ENCODE measurements at regions of chr3 and their contacts with region 1.

Region 1: DNA sequence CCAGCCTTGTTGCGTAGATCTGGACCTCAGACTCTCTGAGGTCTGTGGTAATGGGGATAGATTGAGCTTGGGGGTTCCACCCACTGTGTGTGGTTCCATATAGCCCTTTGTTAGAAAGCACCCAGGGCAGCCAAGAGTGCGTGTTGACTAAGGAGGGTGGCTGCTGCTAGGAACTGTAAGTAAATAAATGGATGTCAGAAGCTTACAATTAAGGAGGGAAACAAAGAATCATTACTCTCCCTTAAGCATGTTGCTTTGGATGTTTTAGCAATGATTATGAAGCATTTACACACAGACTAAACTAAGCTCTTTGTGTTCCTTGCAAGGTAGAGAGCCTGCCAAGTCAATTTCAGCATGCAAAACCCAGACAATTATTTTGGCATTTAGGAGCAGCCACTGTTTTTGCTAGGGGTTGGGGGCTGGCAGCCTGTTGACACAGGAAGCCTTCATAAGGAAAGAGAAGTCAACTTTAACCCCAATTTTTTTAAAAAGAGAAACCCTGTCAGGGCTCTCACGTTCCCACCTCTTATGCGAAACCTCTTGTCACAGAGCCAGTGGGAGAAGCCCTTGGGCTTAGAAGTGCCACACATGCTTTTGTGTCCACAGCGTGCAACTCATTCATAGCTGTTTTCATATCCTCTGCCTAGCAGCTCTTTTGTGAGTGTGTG is 127.8 kb downstream of the CMSS1 start:
- DNase-seq: peak in 1 of 2 donors; percentile 74
- H3K4me3 ChIP-seq: peak overlapping the region in 1 of 2 donors; percentile 6
- H3K27ac ChIP-seq: peak overlapping the region; percentile 84 to 92
- H3K4me1 ChIP-seq: peaks cover 19 to 67% of the 10 kb centered on the region in 2 donors
- H3K27me3 ChIP-seq: no peaks in the 10 kb centered on the region
- CTCF ChIP-seq: no peak

Region 2: DNA sequence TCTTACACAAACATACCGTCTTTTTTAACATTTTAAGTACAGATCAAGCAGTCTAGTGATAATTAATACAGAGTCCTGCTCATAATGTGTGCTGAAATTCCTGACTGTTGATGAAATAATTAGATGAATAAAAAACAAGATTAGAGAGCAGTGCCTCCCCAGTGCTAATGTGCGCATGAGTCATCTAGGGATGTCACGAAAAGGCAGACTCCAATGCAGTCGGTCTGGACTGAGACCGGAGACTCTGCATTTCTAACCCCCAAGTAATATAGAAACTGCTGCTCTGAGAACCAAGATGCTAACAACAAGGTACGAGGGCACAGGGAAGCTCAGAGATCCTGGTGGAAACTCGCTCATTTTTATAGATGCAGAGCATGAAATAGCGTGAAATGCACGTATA is 245.6 kb before region 1 on chr3:
- intact Hi-C with region 1: no loop called
- DNase-seq: no peak
- H3K4me3 ChIP-seq: no peak overlapping the region
- H3K27ac ChIP-seq: peak overlapping the region; percentile 41 to 62
- H3K4me1 ChIP-seq: peaks cover 0 to 24% of the 10 kb centered on the region in 2 donors
- H3K27me3 ChIP-seq: no peaks in the 10 kb centered on the region
- CTCF ChIP-seq: no peak

Region 3: DNA sequence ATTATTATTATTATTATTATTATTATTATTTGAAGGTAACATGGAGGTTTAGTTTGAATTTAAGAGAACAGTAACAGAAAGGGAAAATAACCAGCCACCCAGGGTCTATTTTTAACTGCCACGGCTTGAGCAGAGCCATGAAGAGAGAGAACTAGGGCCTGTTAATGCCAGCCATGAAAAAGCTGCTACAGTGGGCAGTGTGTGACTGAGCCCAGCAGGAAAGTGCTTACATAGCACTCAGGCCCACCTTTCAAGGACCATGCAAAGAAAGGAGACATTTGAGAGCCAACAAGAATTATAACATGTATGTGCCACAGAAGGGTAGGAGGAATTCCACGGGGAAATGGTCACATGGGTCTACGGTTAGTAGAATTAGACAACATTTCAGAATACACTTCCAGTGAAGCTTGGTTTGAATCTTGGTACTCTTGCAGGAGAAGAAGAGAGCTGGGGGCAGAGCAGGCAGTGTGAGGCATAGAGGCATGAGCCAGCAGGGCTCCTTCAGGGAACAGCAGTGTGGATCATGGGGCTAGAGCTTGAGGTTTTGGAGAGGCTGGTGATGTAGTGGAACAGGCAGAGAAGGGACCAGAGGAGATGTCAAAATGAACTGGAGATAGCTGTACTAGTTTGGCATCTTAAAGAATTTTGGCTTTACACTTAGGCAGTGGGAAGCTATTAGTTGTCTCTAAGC is 12.9 kb after region 1 on chr3:
- intact Hi-C with region 1: loop called (anchors 2 kb)
- DNase-seq: no peak
- H3K4me3 ChIP-seq: no peak overlapping the region
- H3K27ac ChIP-seq: peak overlapping the region; percentile 87 to 89
- H3K4me1 ChIP-seq: peaks cover 10 to 40% of the 10 kb centered on the region in 2 donors
- H3K27me3 ChIP-seq: no peaks in the 10 kb centered on the region
- CTCF ChIP-seq: no peak

Region 4: DNA sequence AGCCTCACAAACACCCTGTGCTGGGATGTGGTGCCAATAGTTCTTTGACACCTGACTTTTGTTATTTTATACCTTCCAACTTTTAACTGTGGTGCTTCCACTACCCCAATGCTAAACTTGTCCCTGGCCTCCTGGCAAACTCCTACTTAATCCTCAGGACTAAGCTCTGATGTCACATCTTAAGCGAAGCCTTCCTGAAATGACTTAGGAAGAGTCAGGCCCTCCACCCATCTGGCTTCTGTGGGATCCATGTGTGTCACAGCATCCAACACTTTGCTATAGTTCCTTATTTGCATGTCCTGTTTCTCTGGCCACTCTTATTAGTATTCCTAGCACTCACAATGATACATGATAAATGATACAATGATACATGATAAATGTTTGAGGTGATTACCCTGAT is 35.7 kb after region 1 on chr3:
- intact Hi-C with region 1: no loop called
- DNase-seq: no peak
- H3K4me3 ChIP-seq: no peak overlapping the region
- H3K27ac ChIP-seq: peak overlapping the region in 1 of 2 donors; percentile 30
- H3K4me1 ChIP-seq: peaks cover 0 to 3% of the 10 kb centered on the region in 2 donors
- H3K27me3 ChIP-seq: no peaks in the 10 kb centered on the region
- CTCF ChIP-seq: no peak

Region 5: DNA sequence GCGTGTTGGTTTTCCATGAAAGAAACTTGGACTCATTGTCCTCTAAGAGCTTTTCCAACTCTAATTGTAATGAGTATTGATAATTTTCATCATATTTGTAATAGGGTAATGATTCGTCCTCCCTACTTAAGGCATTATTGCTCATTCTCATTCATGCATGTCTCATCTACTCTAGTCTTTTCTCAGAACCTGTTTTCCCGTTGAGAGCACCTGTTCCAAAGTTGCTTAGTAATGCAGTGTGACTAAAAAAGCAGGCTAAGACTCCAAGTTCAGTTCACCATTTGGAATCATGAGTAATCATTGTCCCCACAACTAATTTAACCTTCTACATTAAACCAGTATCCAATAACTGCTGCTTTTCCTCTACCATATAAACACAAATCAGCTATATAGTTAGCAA is 84.9 kb after region 1 on chr3:
- intact Hi-C with region 1: no loop called
- DNase-seq: no peak
- H3K4me3 ChIP-seq: no peak overlapping the region
- H3K27ac ChIP-seq: peak overlapping the region in 1 of 2 donors; percentile 45
- H3K4me1 ChIP-seq: peaks cover 4 to 23% of the 10 kb centered on the region in 2 donors
- H3K27me3 ChIP-seq: no peaks in the 10 kb centered on the region
- CTCF ChIP-seq: no peak

Region 6: DNA sequence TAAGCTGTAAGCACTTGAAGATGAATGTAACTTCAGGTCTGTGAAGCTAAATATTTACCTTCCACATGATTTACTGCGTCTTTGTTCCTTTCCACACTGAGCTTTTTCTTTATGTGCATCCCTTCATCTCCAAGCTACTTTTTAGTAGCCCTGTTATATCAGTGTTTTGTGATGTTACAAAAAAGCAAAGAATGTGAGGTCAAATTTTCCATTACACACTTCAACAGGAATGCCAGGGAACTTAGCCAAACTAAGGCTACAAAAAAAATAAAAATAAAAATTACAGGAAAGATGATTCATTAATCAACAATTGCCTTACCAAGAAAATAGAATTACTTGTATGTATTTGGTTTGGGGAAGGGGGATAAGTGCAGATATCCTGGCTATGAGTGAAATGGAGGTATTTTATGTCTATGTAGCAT is 95.9 kb after region 1 on chr3:
- intact Hi-C with region 1: loop called (anchors 2 kb)
- DNase-seq: no peak
- H3K4me3 ChIP-seq: no peak overlapping the region
- H3K27ac ChIP-seq: peak overlapping the region; percentile 89 to 94
- H3K4me1 ChIP-seq: peaks cover 9 to 40% of the 10 kb centered on the region in 2 donors
- H3K27me3 ChIP-seq: no peaks in the 10 kb centered on the region
- CTCF ChIP-seq: no peak

Region 7: DNA sequence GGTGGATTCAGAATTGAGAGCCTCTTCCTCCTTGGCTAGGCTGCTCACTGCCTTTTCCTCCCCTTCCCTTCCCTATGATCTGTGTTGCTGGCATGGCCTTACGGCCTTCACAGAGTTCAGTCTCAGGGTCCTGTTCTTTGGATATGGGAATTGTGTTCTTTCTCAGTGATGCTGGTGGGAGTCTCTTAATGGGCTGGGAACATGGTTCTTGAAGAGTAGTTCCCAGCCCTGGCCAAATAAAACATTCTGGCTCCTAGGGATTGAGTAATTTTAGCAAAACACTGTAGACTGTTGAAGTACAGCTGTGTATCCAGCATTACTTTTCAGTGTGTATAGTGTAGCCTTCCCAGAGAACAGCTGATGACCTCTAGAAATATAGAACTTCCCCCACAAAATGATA is 191.5 kb after region 1 on chr3:
- intact Hi-C with region 1: no loop called
- DNase-seq: no peak
- H3K4me3 ChIP-seq: no peak overlapping the region
- H3K27ac ChIP-seq: peak overlapping the region; percentile 67 to 76
- H3K4me1 ChIP-seq: peaks cover 0 to 20% of the 10 kb centered on the region in 2 donors
- H3K27me3 ChIP-seq: no peaks in the 10 kb centered on the region
- CTCF ChIP-seq: no peak